Naive thymus-derived CD8-positive, alpha-beta T cell (primary cell): ENCODE measurements at regions of chr3 and their contacts with region 1.

Region 1: DNA sequence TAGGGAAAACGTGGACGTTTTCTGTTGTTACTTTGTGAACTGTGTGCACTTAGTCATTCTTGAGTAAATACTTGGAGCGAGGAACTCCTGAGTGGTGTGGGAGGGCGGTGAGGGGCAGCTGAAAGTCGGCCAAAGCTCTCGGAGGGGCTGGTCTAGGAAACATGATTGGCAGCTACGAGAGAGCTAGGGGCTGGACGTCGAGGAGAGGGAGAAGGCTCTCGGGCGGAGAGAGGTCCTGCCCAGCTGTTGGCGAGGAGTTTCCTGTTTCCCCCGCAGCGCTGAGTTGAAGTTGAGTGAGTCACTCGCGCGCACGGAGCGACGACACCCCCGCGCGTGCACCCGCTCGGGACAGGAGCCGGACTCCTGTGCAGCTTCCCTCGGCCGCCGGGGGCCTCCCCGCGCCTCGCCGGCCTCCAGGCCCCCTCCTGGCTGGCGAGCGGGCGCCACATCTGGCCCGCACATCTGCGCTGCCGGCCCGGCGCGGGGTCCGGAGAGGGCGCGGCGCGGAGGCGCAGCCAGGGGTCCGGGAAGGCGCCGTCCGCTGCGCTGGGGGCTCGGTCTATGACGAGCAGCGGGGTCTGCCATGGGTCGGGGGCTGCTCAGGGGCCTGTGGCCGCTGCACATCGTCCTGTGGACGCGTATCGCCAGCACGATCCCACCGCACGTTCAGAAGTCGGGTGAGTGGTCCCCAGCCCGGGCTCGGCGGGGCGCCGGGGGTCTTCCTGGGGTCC is at the start of gene TGFBR2:
- DNase-seq: peak; percentile 68 to 89 (median 76)
- ATAC-seq: peak; percentile 62 to 70
- H3K4me3 Mint-ChIP-seq: peak within 1 kb of the TSS; percentile 77 to 100 (median 97)
- H3K27ac Mint-ChIP-seq: peak within 1 kb of the TSS; percentile 94 to 100 (median 98)
- H3K4me1 Mint-ChIP-seq: peaks cover 30 to 80% (median 54%) of the 10 kb centered on the region in 4 donors
- H3K27me3 Mint-ChIP-seq: no peaks in the 10 kb centered on the region
- polyA plus RNA-seq, gene TGFBR2: 128 to 226 (median 131) TPM

Region 2: DNA sequence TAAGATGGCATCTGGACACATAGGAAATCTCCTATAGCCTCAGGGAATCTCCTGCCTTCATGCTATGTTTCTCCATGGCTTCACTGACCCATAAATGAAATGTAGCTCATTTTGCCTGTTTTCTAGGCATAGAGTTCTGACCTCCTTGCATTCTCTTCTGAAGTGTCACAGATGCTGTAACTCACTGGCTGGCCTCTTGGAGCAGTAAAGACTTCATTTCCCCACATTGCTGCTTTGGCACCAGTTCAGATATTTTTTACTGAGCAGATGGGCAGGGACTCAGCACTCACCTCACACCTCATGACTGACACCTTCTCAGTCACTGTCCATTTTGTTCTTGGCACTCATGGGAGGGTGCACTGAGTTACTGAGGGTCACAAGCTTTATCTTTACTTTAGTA is 286.8 kb before region 1 on chr3:
- POLR2A ChIA-PET with region 1: interaction called, 15 read pairs
- DNase-seq: peak in 9 of 10 donors; percentile 7 to 75 (median 50)
- ATAC-seq: peak; percentile 98
- H3K4me3 Mint-ChIP-seq: peak overlapping the region in 3 of 10 donors; percentile 0 to 29 (median 2)
- H3K27ac Mint-ChIP-seq: peak overlapping the region in 8 of 10 donors; percentile 0 to 84 (median 39)
- H3K4me1 Mint-ChIP-seq: peaks cover 11 to 33% (median 26%) of the 10 kb centered on the region in 4 donors
- H3K27me3 Mint-ChIP-seq: no peaks in the 10 kb centered on the region

Region 3: GRCh38 chr3:30623351-30623750 is 16.9 kb after region 1 on chr3:
- POLR2A ChIA-PET with region 1: interaction called, 215 read pairs
- DNase-seq: no peak
- ATAC-seq: no peak
- H3K4me3 Mint-ChIP-seq: peak overlapping the region; percentile 16 to 78 (median 72)
- H3K27ac Mint-ChIP-seq: peak overlapping the region; percentile 89 to 100 (median 94)
- H3K4me1 Mint-ChIP-seq: peaks cover 41 to 99% (median 88%) of the 10 kb centered on the region in 4 donors
- H3K27me3 Mint-ChIP-seq: no peaks in the 10 kb centered on the region

Region 4: GRCh38 chr3:30644593-30645012 is 38.1 kb after region 1 on chr3:
- POLR2A ChIA-PET with region 1: interaction called, 215 read pairs
- DNase-seq: peak in 8 of 10 donors; percentile 47 to 75 (median 65)
- ATAC-seq: peak; percentile 72 to 76
- H3K4me3 Mint-ChIP-seq: peak overlapping the region; percentile 60 to 87 (median 80)
- H3K27ac Mint-ChIP-seq: peak overlapping the region; percentile 91 to 100 (median 96)
- H3K4me1 Mint-ChIP-seq: peaks cover 52 to 98% (median 89%) of the 10 kb centered on the region in 4 donors
- H3K27me3 Mint-ChIP-seq: no peaks in the 10 kb centered on the region

Region 5: DNA sequence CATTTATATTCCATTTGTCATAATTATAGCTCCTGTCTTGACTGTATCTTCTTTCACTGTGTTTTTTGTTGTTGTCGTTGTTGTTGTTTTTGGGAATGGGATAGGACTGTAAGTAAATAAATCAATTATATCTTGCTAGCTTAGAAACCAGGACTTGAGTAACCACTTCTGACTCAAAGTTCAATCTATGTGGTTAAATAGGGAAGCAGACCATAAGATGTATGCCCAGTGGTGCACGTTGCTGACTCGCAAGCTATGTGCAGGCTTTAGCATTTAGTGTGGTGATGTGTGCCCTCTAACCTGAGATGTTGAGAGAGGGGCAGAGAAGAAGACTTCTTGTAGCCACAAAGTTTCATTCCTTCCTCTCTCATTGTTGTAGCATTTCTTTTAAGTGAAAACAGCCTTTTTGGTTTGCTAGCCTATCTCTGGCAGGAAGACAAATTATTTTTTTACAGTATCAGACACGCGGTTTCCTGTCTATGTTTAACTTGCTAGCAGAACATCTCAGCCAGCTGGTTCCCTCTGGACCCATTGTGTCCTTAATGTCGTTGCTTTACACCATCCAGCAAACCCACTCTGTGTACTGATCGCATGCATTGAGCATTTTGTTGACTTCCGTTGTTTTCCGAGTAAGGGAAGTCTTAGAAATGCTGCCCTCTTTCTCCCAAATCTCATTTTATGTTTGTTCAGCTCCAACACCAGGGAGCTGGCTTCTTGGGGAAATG is 52.0 kb after region 1 on chr3:
- POLR2A ChIA-PET with region 1: interaction called, 315 read pairs
- DNase-seq: peak in 8 of 10 donors; percentile 41 to 86 (median 76)
- ATAC-seq: peak; percentile 55 to 66
- H3K4me3 Mint-ChIP-seq: peak overlapping the region; percentile 52 to 94 (median 72)
- H3K27ac Mint-ChIP-seq: peak overlapping the region; percentile 94 to 100 (median 98)
- H3K4me1 Mint-ChIP-seq: peaks cover 51 to 99% (median 96%) of the 10 kb centered on the region in 4 donors
- H3K27me3 Mint-ChIP-seq: no peaks in the 10 kb centered on the region

Region 6: DNA sequence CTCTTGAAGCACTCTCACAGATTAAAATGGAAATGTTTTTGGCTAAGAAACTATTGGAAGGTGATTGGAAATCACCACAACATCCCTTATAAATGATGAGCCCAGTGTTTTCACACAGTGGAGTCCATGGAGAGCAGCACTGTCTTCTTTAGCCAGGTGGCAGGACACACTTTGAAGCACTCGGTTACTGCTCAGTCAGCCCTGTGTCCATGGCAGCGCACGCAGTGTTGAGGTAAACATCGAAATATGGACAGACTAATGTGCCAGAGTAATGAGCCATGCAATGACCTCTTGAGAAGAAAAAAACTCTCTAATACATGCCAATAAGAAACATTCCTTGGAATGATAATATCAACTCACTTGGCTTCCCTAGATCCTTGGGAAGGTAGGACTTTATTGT is 66.5 kb after region 1 on chr3:
- POLR2A ChIA-PET with region 1: interaction called, 29 read pairs
- DNase-seq: no peak
- ATAC-seq: no peak
- H3K4me3 Mint-ChIP-seq: peak overlapping the region in 9 of 10 donors; percentile 19 to 71 (median 50)
- H3K27ac Mint-ChIP-seq: peak overlapping the region; percentile 76 to 100 (median 84)
- H3K4me1 Mint-ChIP-seq: peaks cover 62 to 99% (median 98%) of the 10 kb centered on the region in 4 donors
- H3K27me3 Mint-ChIP-seq: no peaks in the 10 kb centered on the region